ENCODE measurements at regions of chr16 and their contacts with region 1.

Region 1: DNA sequence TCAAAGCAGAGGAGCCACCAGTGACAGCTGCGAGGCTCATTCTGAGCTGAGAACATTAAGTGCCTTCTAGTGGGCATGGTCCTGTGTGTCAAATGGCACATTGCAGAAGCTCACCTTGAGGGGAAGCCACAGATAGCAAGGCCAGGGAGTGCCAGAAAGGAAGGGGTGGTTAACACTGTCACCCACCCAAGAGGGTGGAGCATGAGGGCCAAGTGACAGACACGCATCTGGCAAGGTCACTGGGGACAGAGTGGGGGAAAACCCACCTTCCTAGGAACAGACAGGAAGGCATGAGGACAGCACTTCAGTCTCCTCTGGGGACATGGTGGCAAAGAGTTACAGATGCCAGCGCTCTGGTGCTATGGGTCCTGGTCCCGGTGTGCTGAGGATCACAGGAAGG is 22.1 kb downstream of the NUBP1 start:
- DNase-seq: no peak

Region 2: DNA sequence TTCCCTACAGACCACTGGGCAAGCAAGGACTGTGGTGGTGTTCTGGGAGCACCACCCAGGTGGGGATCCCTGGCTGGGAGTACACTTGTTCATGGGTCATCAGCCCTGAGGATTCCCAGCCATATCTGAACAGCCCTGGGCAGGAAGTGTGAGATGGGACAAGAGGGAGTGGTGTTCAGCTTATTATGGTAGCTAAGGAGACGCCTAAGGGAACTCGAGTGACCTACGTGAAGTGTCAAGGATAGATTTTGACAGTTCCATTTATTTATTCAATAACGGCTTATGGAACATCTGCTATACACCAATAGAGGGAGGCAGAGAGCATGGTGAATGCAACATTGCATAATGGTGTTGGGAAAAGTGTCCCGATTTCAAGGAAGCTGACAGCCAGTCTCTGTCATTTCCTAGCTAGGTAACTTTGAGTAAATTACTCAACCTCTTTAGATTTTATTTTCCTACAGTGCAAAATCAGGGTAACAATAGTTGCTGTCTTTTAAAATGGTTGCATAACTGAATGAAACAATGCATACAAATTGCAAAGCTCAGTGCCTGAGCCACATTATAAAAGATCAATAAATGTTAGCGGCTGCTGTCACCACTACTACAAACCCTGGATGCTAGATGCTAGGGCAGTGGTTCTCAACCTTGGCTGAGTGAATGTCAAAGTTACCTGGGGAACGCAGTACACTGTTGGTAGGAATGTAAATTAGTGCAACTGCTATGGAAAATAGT is 1117.6 kb before region 1 on chr16:
- intact Hi-C with region 1: loop called in 1 of 2 experiments (anchors 2 kb)
- DNase-seq: no peak

Region 3: DNA sequence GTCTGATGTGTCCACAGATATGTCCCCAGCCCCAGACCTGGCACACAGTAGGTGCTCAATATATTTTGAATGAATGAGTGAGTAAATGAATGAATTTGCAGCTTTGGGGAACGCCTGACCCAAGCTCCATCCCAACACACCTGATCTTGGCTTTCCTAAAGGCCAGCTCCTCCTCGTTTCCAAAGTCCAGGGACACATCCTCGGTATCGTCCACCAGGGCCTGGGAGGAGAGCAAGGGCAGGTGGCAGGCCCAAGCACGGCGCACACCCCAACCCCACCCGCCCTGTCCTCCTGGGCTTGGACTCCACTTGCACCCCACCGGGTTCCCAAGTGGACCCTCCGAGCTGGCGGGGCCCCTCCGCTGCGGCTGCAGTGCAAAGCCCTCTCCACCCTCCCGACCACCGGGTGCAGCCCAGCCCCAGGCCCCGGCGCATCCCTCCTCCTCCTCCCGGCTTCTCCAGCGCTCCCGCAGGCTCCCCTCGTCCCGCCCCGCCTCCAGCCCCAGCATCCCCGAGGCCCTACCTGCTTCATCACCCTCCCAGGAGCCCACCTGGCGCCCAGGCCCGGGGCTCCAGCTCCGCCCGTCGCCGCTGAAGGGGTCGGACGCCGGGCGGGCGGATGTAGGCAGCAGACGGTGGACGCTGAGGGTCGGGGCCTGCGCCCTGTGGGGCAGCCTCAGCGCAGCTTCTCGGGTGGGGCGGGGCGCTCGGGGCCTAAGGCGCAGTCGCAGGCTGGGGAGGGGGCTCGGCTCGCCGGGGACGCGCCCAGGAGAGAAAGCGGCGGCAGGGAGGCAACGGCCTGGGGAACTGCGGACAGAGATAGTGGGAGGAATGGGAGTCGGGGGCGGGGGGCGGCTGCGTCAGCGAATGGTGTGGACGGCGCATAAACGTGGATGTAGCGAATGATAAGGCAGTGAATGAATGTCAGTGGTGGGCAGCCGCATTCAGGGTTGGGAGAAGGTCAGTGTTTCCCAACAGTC is 52.5 kb after region 1 on chr16 and contains the start of gene TVP23A:
- intact Hi-C with region 1: loop called in 1 of 2 experiments (anchors 5 kb)
- DNase-seq: no peak
- total RNA-seq, gene TVP23A: 2.1 to 3.7 TPM

Region 4: DNA sequence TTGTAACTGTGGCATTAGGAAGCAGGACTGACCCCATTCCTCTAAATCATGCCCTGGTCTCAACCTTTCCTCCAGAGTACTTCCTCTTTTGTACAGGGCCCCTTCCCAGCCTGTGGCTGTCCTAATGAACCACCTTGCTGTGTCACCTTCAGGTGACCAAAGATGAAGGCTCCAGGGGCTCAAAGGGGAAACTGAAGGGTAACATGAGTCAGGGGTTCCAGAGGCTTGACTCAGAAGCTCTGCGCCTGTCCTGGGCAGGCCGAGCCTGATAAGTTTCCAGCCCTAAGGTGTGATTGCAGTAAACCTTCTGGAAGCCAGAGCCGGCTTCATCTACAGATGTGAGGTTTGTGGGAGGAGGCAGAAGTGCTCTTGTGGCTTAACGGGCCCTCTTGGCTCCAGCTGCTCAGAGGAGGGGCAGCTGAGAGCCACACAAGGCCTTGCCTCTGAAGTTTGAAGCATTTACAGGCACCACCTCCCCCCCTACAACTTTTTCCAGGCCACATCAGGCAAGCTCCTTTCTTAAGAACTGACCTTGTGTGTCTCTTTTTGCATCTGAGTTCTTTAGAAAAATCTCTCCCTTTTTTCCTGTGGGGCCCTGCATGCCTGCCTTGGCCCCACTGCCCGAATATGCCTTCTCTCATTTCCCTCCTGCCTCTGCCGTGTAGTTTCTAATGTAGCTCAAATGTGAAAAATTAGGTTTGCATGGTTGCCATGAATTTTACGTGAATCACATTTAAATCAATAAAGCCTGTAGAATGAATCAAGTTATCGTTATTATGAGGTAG is 328.5 kb after region 1 on chr16:
- intact Hi-C with region 1: no loop called
- DNase-seq: peak; percentile 57